ENCODE measurements at regions of chr5 and their contacts with region 1.

Region 1: GRCh38 chr5:167261309-167262100 is 1029.9 kb upstream of the WWC1 start:
- DNase-seq: peak; percentile 42
- H3K4me3 ChIP-seq: no peak overlapping the region
- H3K27ac ChIP-seq: no peak overlapping the region
- H3K4me1 ChIP-seq: no peaks in the 10 kb centered on the region
- H3K27me3 ChIP-seq: no peaks in the 10 kb centered on the region
- CTCF ChIP-seq: peak; percentile 52

Region 2: DNA sequence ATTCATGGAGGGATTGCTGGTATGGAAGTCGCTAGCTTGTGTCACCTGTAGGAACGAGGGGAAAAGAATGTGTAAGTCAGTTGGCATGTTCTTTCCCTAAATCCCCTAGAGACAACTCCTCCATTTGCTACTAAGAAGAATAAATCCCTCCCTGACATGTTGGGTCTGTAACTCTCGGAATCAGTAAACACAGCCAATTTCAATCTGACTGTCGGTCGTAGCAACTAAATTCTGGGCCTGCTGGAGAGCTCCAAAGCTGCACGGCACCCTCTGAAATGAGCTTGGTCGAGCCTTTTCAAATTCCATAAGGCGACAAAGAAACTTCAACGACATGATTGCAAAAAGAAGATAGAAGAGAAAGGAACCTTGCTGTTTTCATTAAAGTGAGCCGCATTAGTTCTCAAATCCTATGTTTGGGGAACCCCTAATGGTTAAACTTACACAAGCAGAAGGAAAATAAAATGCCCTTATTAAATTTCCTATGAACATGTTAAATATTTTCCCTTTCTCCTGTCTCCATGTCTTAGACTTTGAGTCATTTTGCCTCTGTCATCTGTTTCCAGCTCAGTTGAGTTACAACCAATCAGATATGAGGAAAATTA is 294.2 kb after region 1 on chr5:
- CTCF ChIA-PET with region 1: no interaction called
- POLR2A ChIA-PET with region 1: no interaction called
- intact Hi-C with region 1: loop called (anchors 5 kb)
- DNase-seq: no peak
- H3K4me3 ChIP-seq: no peak overlapping the region
- H3K27ac ChIP-seq: no peak overlapping the region
- H3K4me1 ChIP-seq: peaks cover 7% of the 10 kb centered on the region
- H3K27me3 ChIP-seq: no peaks in the 10 kb centered on the region
- CTCF ChIP-seq: peak; percentile 38; the same call in 1 of the 2 replicates